PC-3 (cell line): ENCODE measurements at regions of chr12 and their contacts with region 1.

Region 1: DNA sequence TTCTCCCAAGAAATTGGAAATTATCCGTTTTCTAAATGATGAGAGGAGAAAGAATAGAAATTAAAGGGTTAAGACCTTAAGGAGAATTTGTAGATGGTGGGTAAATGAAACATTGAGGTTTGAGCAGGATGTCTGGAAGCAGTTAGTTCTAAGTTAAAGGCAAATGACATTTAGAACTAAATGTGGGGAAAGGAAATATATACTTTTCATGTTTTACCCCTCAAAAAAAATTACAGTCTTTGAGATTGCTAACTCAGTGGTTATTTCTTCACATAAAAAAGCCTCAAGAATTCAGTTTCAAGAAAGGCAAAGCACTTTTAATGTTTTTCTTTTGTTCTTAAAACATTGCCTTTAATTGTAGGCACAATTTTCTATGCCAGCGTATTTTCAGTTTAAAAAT is 114.0 kb downstream of the PLEKHA5 start:
- DNase-seq: no peak
- ATAC-seq: no peak
- H3K4me3 ChIP-seq: no peak overlapping the region
- H3K27ac ChIP-seq: no peak overlapping the region
- H3K4me1 ChIP-seq: no peaks in the 10 kb centered on the region
- H3K27me3 ChIP-seq: no peaks in the 10 kb centered on the region
- CTCF ChIP-seq: no peak

Region 2: GRCh38 chr12:19066475-19067001 is 177.0 kb before region 1 on chr12:
- CTCF ChIA-PET with region 1: no interaction called
- POLR2A ChIA-PET with region 1: no interaction called
- intact Hi-C with region 1: no loop called
- DNase-seq: no peak
- ATAC-seq: no peak
- H3K4me3 ChIP-seq: no peak overlapping the region
- H3K27ac ChIP-seq: no peak overlapping the region
- H3K4me1 ChIP-seq: no peaks in the 10 kb centered on the region
- H3K27me3 ChIP-seq: no peaks in the 10 kb centered on the region
- CTCF ChIP-seq: no peak

Region 3: GRCh38 chr12:19165451-19165850 is 78.1 kb before region 1 on chr12:
- CTCF ChIA-PET with region 1: no interaction called
- POLR2A ChIA-PET with region 1: no interaction called
- intact Hi-C with region 1: no loop called
- DNase-seq: peak; percentile 58
- ATAC-seq: no peak
- H3K4me3 ChIP-seq: no peak overlapping the region
- H3K27ac ChIP-seq: no peak overlapping the region
- H3K4me1 ChIP-seq: peaks cover 11% of the 10 kb centered on the region
- H3K27me3 ChIP-seq: no peaks in the 10 kb centered on the region
- CTCF ChIP-seq: no peak

Region 4: GRCh38 chr12:19222558-19222957 is 21.0 kb before region 1 on chr12:
- CTCF ChIA-PET with region 1: no interaction called
- POLR2A ChIA-PET with region 1: no interaction called
- intact Hi-C with region 1: loop called (anchors 1 kb)
- DNase-seq: no peak
- ATAC-seq: no peak
- H3K4me3 ChIP-seq: no peak overlapping the region
- H3K27ac ChIP-seq: peak overlapping the region; percentile 90
- H3K4me1 ChIP-seq: peaks cover 26% of the 10 kb centered on the region
- H3K27me3 ChIP-seq: no peaks in the 10 kb centered on the region
- CTCF ChIP-seq: no peak